ENCODE measurements at regions of chr9 and their contacts with region 1.

Region 1: DNA sequence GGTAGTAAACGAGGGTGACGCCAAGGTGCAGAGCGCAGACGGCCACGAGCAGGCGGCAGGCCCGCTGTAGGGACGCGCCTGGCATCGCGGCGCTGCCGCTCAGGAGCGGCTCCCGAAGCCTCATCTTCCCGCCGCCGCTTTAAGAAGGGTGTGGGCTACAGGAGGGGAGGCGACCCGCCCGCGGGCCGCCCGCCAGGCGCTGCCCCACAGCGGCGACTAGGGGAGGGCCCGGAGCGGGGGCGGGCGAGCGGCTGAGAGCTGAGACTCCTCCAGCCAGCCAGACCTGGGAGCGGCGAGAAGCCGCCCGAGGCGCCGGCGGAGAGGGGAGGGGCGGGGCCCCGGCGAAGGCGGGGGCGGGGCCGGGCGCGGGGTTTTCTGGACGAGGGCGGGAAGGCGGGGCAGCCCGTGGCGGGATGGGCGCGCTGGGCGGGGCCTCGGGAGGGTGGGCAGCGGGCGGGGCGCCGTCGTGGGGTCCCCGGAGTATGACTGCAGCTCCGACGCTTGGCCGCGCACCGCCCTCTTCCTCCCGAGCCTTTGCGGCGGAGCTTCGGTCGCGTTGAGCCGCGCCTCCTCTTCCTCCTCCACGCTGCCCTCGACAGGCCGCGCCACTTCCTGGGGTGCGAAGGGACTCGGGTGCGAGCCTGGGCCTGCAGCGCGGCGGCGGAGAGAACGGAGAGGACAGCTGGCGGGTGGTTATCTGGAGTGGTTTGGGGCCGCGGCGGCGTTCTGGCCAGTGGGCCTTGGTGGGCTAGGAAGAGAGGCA is at the start of gene B4GALT1:
- DNase-seq: peak; percentile 94 to 99 (median 97)
- ATAC-seq: peak; percentile 82
- H3K4me3 ChIP-seq: peak within 1 kb of the TSS; percentile 86 to 96
- H3K4me3 Mint-ChIP-seq: peak within 1 kb of the TSS; percentile 93
- H3K27ac ChIP-seq: peak within 1 kb of the TSS; percentile 79 to 94
- H3K27ac Mint-ChIP-seq: peak within 1 kb of the TSS; percentile 99
- H3K4me1 ChIP-seq: peaks cover 54% of the 10 kb centered on the region
- H3K4me1 Mint-ChIP-seq: peaks cover 62% of the 10 kb centered on the region
- H3K27me3 ChIP-seq: no peaks in the 10 kb centered on the region
- H3K27me3 Mint-ChIP-seq: no peaks in the 10 kb centered on the region
- CTCF ChIP-seq: no peak
- total RNA-seq, gene B4GALT1: 139 to 140 TPM

Region 2: DNA sequence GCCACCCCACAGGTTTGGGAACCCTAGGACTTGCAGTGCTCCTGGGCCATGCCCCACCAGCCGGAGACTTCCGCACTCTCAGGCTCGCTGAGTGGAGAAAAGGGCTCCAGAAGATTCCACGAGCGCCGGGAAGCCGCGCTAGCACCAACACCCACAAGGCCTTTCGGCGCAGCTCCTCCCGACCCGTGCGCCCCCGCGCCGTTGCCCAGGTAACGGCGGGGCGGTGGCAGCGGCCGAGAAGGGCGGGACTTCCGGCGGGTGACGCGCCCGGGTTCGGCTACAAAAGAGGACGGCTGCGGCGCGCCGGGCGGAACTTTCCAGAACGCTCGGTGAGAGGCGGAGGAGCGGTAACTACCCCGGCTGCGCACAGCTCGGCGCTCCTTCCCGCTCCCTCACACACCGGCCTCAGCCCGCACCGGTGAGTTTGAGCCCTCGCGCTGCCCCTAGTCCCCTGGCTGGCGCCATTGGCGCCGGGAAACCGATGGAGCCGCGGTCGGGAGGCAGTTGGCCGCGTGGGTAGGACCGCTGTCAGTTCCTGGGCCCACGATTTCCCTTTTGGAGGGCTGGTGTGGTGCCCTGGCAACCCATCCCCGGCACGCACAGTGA is 142.2 kb before region 1 on chr9 and contains the start of gene DNAJA1:
- CTCF ChIA-PET with region 1: no interaction called
- POLR2A ChIA-PET with region 1: no interaction called
- intact Hi-C with region 1: loop called in 1 of 2 experiments (anchors 1 kb)
- DNase-seq: peak; percentile 92 to 98 (median 96)
- ATAC-seq: peak; percentile 80
- H3K4me3 ChIP-seq: peak within 1 kb of the TSS; percentile 100
- H3K4me3 Mint-ChIP-seq: peak within 1 kb of the TSS; percentile 96
- H3K27ac ChIP-seq: peak within 1 kb of the TSS; percentile 100
- H3K27ac Mint-ChIP-seq: peak within 1 kb of the TSS; percentile 96
- H3K4me1 ChIP-seq: peaks cover 63% of the 10 kb centered on the region
- H3K4me1 Mint-ChIP-seq: peaks cover 70% of the 10 kb centered on the region
- H3K27me3 ChIP-seq: no peaks in the 10 kb centered on the region
- H3K27me3 Mint-ChIP-seq: no peaks in the 10 kb centered on the region
- CTCF ChIP-seq: no peak
- total RNA-seq, gene DNAJA1: 170 to 172 TPM

Region 3: GRCh38 chr9:33130508-33130911 is 36.7 kb before region 1 on chr9:
- CTCF ChIA-PET with region 1: interaction called, 14 read pairs
- POLR2A ChIA-PET with region 1: interaction called, 3 read pairs
- intact Hi-C with region 1: loop called (anchors 5 kb)
- DNase-seq: peak in 2 of 9 experiments; percentile 49 to 68
- ATAC-seq: peak; percentile 74
- H3K4me3 ChIP-seq: no peak overlapping the region
- H3K4me3 Mint-ChIP-seq: no peak overlapping the region
- H3K27ac ChIP-seq: peak overlapping the region in 1 of 2 experiments; percentile 83
- H3K27ac Mint-ChIP-seq: peak overlapping the region; percentile 89
- H3K4me1 ChIP-seq: peaks cover 16% of the 10 kb centered on the region
- H3K4me1 Mint-ChIP-seq: peaks cover 53% of the 10 kb centered on the region
- H3K27me3 ChIP-seq: no peaks in the 10 kb centered on the region
- H3K27me3 Mint-ChIP-seq: no peaks in the 10 kb centered on the region
- CTCF ChIP-seq: no peak

Region 4: GRCh38 chr9:33146313-33146712 is 20.9 kb before region 1 on chr9:
- CTCF ChIA-PET with region 1: interaction called, 7 read pairs
- POLR2A ChIA-PET with region 1: interaction called, 16 read pairs
- intact Hi-C with region 1: loop called in 1 of 2 experiments (anchors 1 kb)
- DNase-seq: no peak
- ATAC-seq: no peak
- H3K4me3 ChIP-seq: no peak overlapping the region
- H3K4me3 Mint-ChIP-seq: no peak overlapping the region
- H3K27ac ChIP-seq: no peak overlapping the region
- H3K27ac Mint-ChIP-seq: no peak overlapping the region
- H3K4me1 ChIP-seq: peaks cover 74% of the 10 kb centered on the region
- H3K4me1 Mint-ChIP-seq: peaks cover 77% of the 10 kb centered on the region
- H3K27me3 ChIP-seq: no peaks in the 10 kb centered on the region
- H3K27me3 Mint-ChIP-seq: no peaks in the 10 kb centered on the region
- CTCF ChIP-seq: no peak

Region 5: GRCh38 chr9:33264473-33265177 is 97.4 kb after region 1 on chr9 and contains the starts of genes BAG1 and CHMP5:
- CTCF ChIA-PET with region 1: no interaction called
- POLR2A ChIA-PET with region 1: interaction called, 3 read pairs
- intact Hi-C with region 1: loop called in 1 of 2 experiments (anchors 1 kb)
- DNase-seq: peak; percentile 99 to 100 (median 100)
- ATAC-seq: peak; percentile 97
- H3K4me3 ChIP-seq: peak within 1 kb of the TSS; percentile 69 to 98
- H3K4me3 Mint-ChIP-seq: peak within 1 kb of the TSS; percentile 96
- H3K27ac ChIP-seq: peak within 1 kb of the TSS; percentile 74 to 94
- H3K27ac Mint-ChIP-seq: peak within 1 kb of the TSS; percentile 97
- H3K4me1 ChIP-seq: peaks cover 21% of the 10 kb centered on the region
- H3K4me1 Mint-ChIP-seq: peaks cover 62% of the 10 kb centered on the region
- H3K27me3 ChIP-seq: no peaks in the 10 kb centered on the region
- H3K27me3 Mint-ChIP-seq: no peaks in the 10 kb centered on the region
- CTCF ChIP-seq: no peak
- total RNA-seq, gene BAG1: 56.8 to 64.3 TPM
- total RNA-seq, gene CHMP5: 13.4 to 14.2 TPM